ENCODE measurements at regions of chr20 and their contacts with region 1.

Region 1: DNA sequence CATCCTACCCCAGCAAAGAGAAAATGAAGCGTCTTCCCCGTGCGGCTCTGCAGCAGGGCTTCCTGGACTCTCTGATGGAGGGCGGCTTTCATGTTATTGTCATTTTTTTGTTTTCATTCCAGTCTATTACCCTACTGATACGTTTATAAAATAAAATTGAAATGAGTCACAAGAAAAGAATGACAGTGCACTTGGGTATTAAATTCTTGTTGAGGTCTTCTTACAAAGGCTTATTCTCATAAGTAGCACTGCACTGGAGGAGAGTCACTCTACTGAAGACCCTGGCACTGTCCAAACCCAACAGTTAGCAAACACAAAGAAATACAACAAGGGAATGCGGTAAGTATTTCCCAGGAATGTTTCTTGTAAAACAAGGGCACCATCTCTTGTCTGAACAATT is 379.3 kb downstream of the MAFB start:
- DNase-seq: no peak

Region 2: DNA sequence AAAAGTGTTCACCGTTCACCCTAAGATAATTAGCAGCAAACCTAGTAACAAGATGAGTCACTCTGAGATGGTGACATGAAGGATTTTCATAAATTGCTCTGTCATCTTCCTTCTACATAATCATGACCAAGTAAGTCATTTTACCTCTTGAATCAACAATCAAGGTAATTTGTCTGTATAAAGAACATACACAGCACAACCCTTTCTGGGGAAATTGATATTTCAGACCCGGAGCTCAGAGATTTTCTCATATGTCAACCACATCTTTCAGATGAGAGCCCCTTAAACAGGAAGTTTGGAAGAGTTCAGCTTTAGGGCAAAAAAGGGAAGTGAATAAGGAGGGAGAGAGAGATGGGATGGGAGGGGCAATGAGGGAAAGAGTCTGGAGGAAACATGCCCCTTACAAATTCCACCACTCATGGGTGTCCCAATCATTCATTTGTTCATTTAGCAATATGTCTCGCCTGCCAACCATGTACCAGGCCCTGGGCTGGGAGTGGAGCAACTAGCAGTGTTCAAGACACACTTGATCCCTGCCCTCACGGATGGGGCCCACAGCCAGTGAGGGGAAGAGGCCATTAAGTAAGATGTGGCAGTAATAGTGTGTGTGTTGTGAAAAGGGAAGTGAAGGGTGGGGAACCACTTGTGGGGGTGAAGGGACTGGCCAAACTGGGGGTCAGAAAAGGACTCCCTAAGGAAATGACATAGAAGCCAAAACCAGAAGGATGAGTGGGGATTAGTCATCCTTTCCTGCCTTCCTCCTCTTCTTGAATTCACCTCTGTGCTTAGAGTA is 188.4 kb after region 1 on chr20:
- intact Hi-C with region 1: loop called in 1 of 2 experiments (anchors 2 kb)
- DNase-seq: peak; percentile 88